ENCODE measurements at regions of chr15 and their contacts with region 1.

Region 1: GRCh38 chr15:77181305-77182074 is 110.6 kb upstream of the TSPAN3 start:
- DNase-seq: peak; percentile 77
- H3K4me3 ChIP-seq: peak overlapping the region; percentile 35
- H3K27ac ChIP-seq: peak overlapping the region; percentile 64
- H3K4me1 ChIP-seq: peaks cover 30% of the 10 kb centered on the region
- CTCF ChIP-seq: no peak

Region 2: GRCh38 chr15:77118882-77119321 is 62.6 kb before region 1 on chr15:
- CTCF ChIA-PET with region 1: no interaction called
- POLR2A ChIA-PET with region 1: interaction called, 4 read pairs
- intact Hi-C with region 1: loop called (anchors 2 kb)
- DNase-seq: peak; percentile 67
- H3K4me3 ChIP-seq: no peak overlapping the region
- H3K27ac ChIP-seq: no peak overlapping the region
- H3K4me1 ChIP-seq: no peaks in the 10 kb centered on the region
- CTCF ChIP-seq: peak; percentile 94